ENCODE measurements at regions of chr22 and their contacts with region 1.

Region 1: DNA sequence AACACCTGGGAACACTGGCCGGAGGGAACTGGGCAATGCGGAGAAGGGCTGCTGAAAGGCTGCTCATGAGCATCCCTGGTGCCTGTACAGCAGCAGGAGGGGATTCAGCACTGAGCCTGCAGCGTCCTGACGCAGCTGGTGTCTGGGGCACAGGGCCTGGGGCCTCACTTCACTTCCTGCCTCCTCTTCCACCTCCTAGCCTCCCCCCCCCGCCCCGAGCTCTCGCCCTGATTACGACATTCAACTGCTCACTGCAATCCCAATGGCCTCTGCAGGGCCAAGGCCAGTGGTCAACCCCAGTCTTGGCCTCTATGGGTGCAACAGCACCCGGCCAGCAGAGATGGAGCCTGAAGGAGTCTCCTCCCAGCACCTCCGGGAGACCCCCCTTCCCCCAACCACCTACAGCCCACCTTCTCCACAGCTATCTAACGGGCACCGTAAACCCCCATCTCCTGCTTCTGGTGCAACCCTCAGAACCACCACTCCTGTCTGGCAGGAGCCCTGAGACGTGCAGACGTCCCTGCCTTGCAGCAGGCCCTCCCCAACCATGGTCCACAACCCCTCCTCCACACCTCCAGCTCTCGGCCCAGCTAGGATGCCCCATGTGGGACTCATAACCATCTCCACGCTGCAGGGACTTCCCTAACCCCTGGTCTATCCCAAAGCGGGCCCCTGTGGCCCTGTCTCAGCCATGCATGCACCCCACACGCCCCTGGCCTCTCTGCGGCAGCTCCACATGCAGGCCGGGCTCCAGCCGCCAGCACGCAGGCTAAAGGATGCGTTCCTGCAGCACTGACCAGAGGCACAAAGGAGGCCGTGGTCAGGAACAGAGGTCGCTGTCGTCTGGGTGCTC is 38.2 kb downstream of the BRD1 start:
- DNase-seq: no peak
- H3K4me3 ChIP-seq: no peak overlapping the region
- H3K27ac ChIP-seq: peak overlapping the region in 2 of 3 donors; percentile 9 to 44
- H3K4me1 ChIP-seq: peaks cover 10 to 23% of the 10 kb centered on the region in 2 donors
- H3K27me3 ChIP-seq: no peaks in the 10 kb centered on the region
- CTCF ChIP-seq: no peak
- POLR2A ChIP-seq: no peak

Region 2: GRCh38 chr22:49847751-49848689 is 58.5 kb after region 1 on chr22:
- intact Hi-C with region 1: loop called (anchors 10 kb)
- DNase-seq: no peak
- H3K4me3 ChIP-seq: peak overlapping the region in 1 of 3 donors; percentile 26
- H3K27ac ChIP-seq: no peak overlapping the region
- H3K4me1 ChIP-seq: peaks cover 16 to 26% of the 10 kb centered on the region in 2 donors
- H3K27me3 ChIP-seq: peaks cover 18% of the 10 kb centered on the region
- CTCF ChIP-seq: no peak
- POLR2A ChIP-seq: no peak